ENCODE measurements at regions of chr9 and their contacts with region 1.

Region 1: GRCh38 chr9:2923766-2924379 is 80.0 kb upstream of the PUM3 start:
- DNase-seq: no peak
- ATAC-seq: no peak
- H3K4me3 ChIP-seq: no peak overlapping the region
- H3K27ac ChIP-seq: no peak overlapping the region
- H3K4me1 ChIP-seq: no peaks in the 10 kb centered on the region
- H3K27me3 ChIP-seq: no peaks in the 10 kb centered on the region
- CTCF ChIP-seq: no peak
- EP300 ChIP-seq: no peak
- POLR2A ChIP-seq: no peak
- RAD21 ChIP-seq: no peak

Region 2: DNA sequence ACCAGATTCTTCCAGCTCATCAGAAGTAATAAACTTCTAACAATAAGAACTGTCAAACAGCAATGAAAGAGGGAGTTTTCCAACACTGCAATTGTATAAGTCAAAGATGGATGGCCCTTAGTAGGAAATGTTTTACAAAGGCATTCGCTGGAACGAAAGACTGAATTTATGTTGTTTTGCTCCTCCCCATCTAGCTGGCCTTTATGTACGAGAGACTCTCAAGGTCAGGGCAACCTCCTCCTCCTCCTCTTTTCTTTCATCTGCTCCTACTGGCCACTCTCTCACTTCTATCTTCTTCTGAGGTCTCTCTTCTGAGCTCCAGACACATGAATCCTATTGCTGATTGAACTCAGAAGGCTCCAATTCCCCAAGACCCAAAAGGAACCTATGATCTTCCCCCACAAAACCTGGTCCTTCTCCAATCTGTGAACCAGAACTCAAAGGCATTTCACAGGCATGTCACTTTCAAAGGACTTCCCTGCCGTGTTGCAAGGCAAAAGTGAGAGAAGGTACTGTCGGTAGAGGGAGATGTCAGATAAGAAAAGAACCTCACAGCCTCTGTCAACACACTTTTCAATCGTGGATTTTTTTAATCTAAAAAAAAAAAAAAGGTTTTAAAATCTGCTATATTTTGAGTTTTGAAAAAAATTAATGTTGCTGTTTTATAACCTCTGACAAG is 51.5 kb before region 1 on chr9:
- CTCF ChIA-PET with region 1: no interaction called
- POLR2A ChIA-PET with region 1: no interaction called
- in situ Hi-C with region 1: no loop called
- intact Hi-C with region 1: no loop called
- DNase-seq: peak; percentile 49
- ATAC-seq: peak; percentile 91
- H3K4me3 ChIP-seq: peak overlapping the region in 1 of 3 experiments; percentile 8; a peak in 2 of 6 replicates
- H3K27ac ChIP-seq: no peak overlapping the region
- H3K4me1 ChIP-seq: peaks cover 18% of the 10 kb centered on the region
- H3K27me3 ChIP-seq: peaks cover 2 to 10% of the 10 kb centered on the region in 2 experiments; a peak in 2 of 5 replicates
- CTCF ChIP-seq: peak; percentile 72
- EP300 ChIP-seq: no peak
- POLR2A ChIP-seq: no peak
- RAD21 ChIP-seq: no peak

Region 3: DNA sequence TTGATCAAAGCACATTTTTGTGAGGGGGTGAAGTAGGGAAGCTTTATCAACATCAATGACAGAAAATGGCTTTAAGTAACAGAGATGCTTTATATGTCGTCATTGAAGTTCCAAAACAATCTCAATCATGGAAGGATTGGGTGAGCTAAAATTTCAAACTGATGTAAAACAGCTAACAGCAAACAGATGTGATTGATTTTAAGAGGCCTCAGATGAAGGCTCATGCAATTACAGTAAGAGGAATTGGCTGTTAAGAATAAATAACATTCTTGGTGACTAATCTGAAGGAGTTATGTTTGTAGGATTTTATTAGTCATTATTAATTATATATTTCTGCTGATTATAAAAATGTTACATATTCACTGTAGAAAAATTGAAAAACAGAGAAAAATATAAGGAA is 16.5 kb before region 1 on chr9:
- CTCF ChIA-PET with region 1: no interaction called
- POLR2A ChIA-PET with region 1: no interaction called
- in situ Hi-C with region 1: no loop called
- intact Hi-C with region 1: loop called (anchors 1 kb)
- DNase-seq: no peak
- ATAC-seq: no peak
- H3K4me3 ChIP-seq: no peak overlapping the region
- H3K27ac ChIP-seq: no peak overlapping the region
- H3K4me1 ChIP-seq: no peaks in the 10 kb centered on the region
- H3K27me3 ChIP-seq: no peaks in the 10 kb centered on the region
- CTCF ChIP-seq: no peak
- EP300 ChIP-seq: no peak
- POLR2A ChIP-seq: no peak
- RAD21 ChIP-seq: no peak

Measured in HepG2 (cell line).